H1 (cell line): ENCODE measurements at regions of chr17 and their contacts with region 1.

Region 1: DNA sequence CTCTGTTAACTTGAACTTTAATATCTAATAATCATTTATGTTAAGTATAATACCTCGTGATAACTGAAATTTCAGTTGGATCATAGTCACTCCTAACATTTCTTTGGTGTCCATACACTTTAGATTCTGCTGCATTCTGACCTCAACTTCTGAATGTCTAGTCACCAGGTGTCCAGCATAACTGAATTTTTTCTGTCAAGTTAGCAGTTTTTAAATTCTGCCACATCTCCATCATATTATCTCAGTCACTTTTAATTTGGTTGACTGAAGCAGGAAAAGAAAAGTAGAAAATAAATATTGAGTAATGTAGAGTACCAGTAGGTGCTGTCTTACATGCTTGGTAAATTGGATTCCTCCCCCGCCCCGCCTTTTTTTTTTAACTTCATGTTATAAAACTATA is 128.6 kb downstream of the TANC2 start:
- DNase-seq: no peak
- H3K4me3 ChIP-seq: no peak overlapping the region
- H3K27ac ChIP-seq: no peak overlapping the region
- H3K4me1 ChIP-seq: no peaks in the 10 kb centered on the region
- H3K27me3 ChIP-seq: no peaks in the 10 kb centered on the region
- CTCF ChIP-seq: no peak
- EP300 ChIP-seq: no peak
- POLR2A ChIP-seq: no peak
- RAD21 ChIP-seq: no peak

Region 2: GRCh38 chr17:63082273-63082993 is 12.2 kb before region 1 on chr17:
- CTCF ChIA-PET with region 1: interaction called, 14 read pairs
- POLR2A ChIA-PET with region 1: no interaction called
- DNase-seq: no peak
- H3K4me3 ChIP-seq: no peak overlapping the region
- H3K27ac ChIP-seq: no peak overlapping the region
- H3K4me1 ChIP-seq: no peaks in the 10 kb centered on the region
- H3K27me3 ChIP-seq: no peaks in the 10 kb centered on the region
- CTCF ChIP-seq: peak in 2 of 3 experiments; percentile 15; a peak in 2 of 4 replicates
- EP300 ChIP-seq: no peak
- POLR2A ChIP-seq: no peak
- RAD21 ChIP-seq: peak in 1 of 2 experiments; percentile 52; a peak in 3 of 4 replicates